MCF 10A (cell line): ENCODE measurements at regions of chr7 and their contacts with region 1.

Region 1: GRCh38 chr7:149261829-149262617 is at the start of gene ZNF783:
- DNase-seq: peak; percentile 81
- H3K4me3 Mint-ChIP-seq: peak within 1 kb of the TSS; percentile 78
- H3K27ac Mint-ChIP-seq: peak within 1 kb of the TSS; percentile 93
- H3K4me1 Mint-ChIP-seq: peaks cover 17% of the 10 kb centered on the region
- H3K27me3 Mint-ChIP-seq: no peaks in the 10 kb centered on the region
- CTCF ChIP-seq: peak; percentile 82
- total RNA-seq, gene ZNF783: 39.5 and 49.0 TPM in 2 replicates

Region 2: GRCh38 chr7:149229526-149229925 is 32.5 kb before region 1 on chr7:
- CTCF ChIA-PET with region 1: interaction called, 4 read pairs
- POLR2A ChIA-PET with region 1: interaction called, 16 read pairs
- intact Hi-C with region 1: no loop called
- DNase-seq: no peak
- H3K4me3 Mint-ChIP-seq: no peak overlapping the region
- H3K27ac Mint-ChIP-seq: no peak overlapping the region
- H3K4me1 Mint-ChIP-seq: peaks cover 17% of the 10 kb centered on the region
- H3K27me3 Mint-ChIP-seq: no peaks in the 10 kb centered on the region
- CTCF ChIP-seq: no peak

Region 3: GRCh38 chr7:149248777-149249176 is 13.2 kb before region 1 on chr7:
- CTCF ChIA-PET with region 1: interaction called, 18 read pairs
- POLR2A ChIA-PET with region 1: interaction called, 8 read pairs
- intact Hi-C with region 1: no loop called
- DNase-seq: no peak
- H3K4me3 Mint-ChIP-seq: no peak overlapping the region
- H3K27ac Mint-ChIP-seq: no peak overlapping the region
- H3K4me1 Mint-ChIP-seq: no peaks in the 10 kb centered on the region
- H3K27me3 Mint-ChIP-seq: no peaks in the 10 kb centered on the region
- CTCF ChIP-seq: no peak

Region 4: GRCh38 chr7:149284850-149285626 is 23.0 kb after region 1 on chr7:
- CTCF ChIA-PET with region 1: interaction called, 10 read pairs
- POLR2A ChIA-PET with region 1: interaction called, 13 read pairs
- intact Hi-C with region 1: no loop called
- DNase-seq: peak; percentile 87
- H3K4me3 Mint-ChIP-seq: peak overlapping the region; percentile 71
- H3K27ac Mint-ChIP-seq: peak overlapping the region; percentile 65
- H3K4me1 Mint-ChIP-seq: peaks cover 14% of the 10 kb centered on the region
- H3K27me3 Mint-ChIP-seq: no peaks in the 10 kb centered on the region
- CTCF ChIP-seq: no peak

Region 5: DNA sequence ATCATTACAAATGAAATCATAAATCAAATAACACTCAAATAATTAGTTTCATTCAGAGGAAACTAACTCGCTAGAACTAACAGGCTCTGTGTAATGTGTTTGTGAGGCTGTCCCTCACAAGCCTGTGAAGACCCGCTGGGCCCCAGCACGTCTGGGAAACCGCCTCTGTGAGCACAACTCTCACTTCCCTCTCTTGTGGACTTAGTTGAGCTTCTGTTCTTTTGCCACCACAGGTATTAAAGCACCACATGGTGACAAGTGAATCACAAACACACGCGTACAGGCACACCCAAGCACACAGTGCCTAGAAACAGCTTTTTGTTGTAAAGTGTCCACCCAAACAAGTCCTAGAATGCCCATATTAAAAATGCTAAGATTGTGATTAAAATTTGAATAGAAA is 147.9 kb after region 1 on chr7:
- CTCF ChIA-PET with region 1: no interaction called
- POLR2A ChIA-PET with region 1: no interaction called
- intact Hi-C with region 1: no loop called
- DNase-seq: no peak
- H3K4me3 Mint-ChIP-seq: no peak overlapping the region
- H3K27ac Mint-ChIP-seq: no peak overlapping the region
- H3K4me1 Mint-ChIP-seq: no peaks in the 10 kb centered on the region
- H3K27me3 Mint-ChIP-seq: no peaks in the 10 kb centered on the region
- CTCF ChIP-seq: no peak